Panc1 (cell line): ENCODE measurements at regions of chr10 and their contacts with region 1.

Region 1: DNA sequence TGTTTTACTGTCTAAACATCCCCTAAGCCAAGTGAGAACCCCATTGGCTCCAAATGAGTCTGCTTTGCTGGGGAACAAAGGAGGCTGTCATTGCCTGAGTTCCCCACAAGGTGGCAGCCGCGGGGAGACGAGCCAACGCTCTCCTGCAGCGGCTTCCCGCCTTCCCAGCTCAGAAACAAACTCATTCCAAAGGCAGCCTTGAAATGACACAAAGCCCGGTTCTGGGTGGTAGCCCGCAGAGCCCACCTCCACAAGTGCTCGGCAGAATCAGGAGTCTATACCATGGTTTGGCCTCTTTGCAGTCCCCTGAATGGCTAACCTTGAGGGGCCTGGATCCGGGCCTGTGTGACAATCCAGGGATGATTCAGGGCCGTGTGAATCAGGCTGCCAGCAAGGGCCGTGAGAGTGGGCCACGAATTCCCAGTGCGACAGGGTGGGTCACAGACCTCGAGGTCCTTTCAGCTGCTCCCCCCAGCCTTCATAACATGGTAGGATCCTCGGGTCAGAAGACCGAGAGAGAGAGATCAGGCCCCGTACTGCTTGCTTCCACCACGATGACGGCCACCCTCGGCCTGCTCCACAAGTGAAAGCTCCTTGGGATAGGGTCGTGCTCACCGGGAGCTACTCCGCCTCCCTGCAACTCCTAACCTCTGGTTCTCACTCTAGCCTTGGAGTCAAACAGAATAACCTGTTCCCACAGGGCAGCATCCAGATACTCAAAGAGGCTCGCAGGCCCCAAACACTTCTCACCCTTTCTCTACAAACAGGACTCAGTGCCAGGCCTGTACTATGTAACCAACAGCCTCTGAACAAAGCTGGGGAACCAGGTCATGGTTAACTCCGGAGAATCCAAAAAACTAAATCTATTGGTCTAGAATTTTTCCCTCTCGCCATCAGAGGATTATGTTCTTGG is 79.6 kb downstream of the DLG5 start:
- DNase-seq: peak; percentile 56
- ATAC-seq: peak; percentile 78
- H3K4me3 ChIP-seq: no peak overlapping the region
- H3K27ac ChIP-seq: peak overlapping the region; percentile 48; the same call in 1 of the 2 replicates
- H3K4me1 ChIP-seq: peaks cover 50% of the 10 kb centered on the region
- H3K27me3 ChIP-seq: no peaks in the 10 kb centered on the region
- CTCF ChIP-seq: peak; percentile 99

Region 2: GRCh38 chr10:77641788-77642397 is 205.1 kb before region 1 on chr10:
- CTCF ChIA-PET with region 1: no interaction called
- POLR2A ChIA-PET with region 1: no interaction called
- in situ Hi-C with region 1: no loop called
- intact Hi-C with region 1: no loop called
- DNase-seq: peak; percentile 84
- ATAC-seq: 0 out of 2 replicates have a peak, but pooled peaks have one; percentile 20
- H3K4me3 ChIP-seq: no peak overlapping the region
- H3K27ac ChIP-seq: peak overlapping the region; percentile 13; the same call in 1 of the 2 replicates
- H3K4me1 ChIP-seq: peaks cover 13% of the 10 kb centered on the region
- H3K27me3 ChIP-seq: no peaks in the 10 kb centered on the region
- CTCF ChIP-seq: peak; percentile 89

Region 3: GRCh38 chr10:77898647-77899477 is 51.9 kb after region 1 on chr10:
- CTCF ChIA-PET with region 1: no interaction called
- POLR2A ChIA-PET with region 1: no interaction called
- in situ Hi-C with region 1: no loop called
- intact Hi-C with region 1: no loop called
- DNase-seq: no peak
- ATAC-seq: peak; percentile 68
- H3K4me3 ChIP-seq: no peak overlapping the region
- H3K27ac ChIP-seq: no peak overlapping the region
- H3K4me1 ChIP-seq: peaks cover 12% of the 10 kb centered on the region
- H3K27me3 ChIP-seq: no peaks in the 10 kb centered on the region
- CTCF ChIP-seq: no peak

Region 4: DNA sequence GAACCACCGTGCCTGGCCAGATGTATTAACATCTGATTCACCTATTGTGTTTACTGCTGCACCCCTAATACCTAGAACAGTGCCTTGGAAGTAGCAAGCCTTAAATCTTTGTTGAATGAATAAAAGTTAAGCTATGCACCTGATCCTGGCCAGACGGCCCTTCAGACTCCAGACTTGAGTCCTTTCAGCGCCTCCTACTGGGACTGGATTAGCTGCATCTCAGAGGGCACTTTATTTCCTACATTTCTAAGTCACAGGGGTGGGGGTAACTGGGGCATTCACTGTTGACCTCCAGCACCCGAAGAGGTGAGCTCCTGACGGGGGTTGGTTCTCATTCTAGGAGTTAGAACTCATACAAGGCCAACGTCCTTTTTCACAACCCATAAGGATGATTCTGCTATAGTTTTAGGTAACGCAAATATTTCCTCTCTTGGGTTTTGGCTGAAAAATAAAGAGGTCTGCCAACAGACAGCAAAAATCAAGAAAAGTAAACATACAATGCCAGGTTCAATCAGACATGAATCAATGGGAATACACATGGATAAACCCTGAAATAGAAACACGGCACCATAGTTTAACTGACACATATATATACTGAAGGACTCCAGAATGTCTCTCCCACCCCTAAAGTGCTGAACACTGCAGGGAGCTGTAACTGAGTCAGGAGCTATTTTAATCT is 127.6 kb after region 1 on chr10:
- CTCF ChIA-PET with region 1: interaction called, 4 read pairs
- POLR2A ChIA-PET with region 1: no interaction called
- in situ Hi-C with region 1: no loop called
- intact Hi-C with region 1: loop called (anchors 5 kb)
- DNase-seq: no peak
- ATAC-seq: peak; percentile 72
- H3K4me3 ChIP-seq: no peak overlapping the region
- H3K27ac ChIP-seq: no peak overlapping the region
- H3K4me1 ChIP-seq: 0 out of 2 replicates have a peak, but pooled peaks cover 7% of the 10 kb centered on the region
- H3K27me3 ChIP-seq: no peaks in the 10 kb centered on the region
- CTCF ChIP-seq: peak; percentile 83; the same call in 1 of the 2 replicates

Region 5: DNA sequence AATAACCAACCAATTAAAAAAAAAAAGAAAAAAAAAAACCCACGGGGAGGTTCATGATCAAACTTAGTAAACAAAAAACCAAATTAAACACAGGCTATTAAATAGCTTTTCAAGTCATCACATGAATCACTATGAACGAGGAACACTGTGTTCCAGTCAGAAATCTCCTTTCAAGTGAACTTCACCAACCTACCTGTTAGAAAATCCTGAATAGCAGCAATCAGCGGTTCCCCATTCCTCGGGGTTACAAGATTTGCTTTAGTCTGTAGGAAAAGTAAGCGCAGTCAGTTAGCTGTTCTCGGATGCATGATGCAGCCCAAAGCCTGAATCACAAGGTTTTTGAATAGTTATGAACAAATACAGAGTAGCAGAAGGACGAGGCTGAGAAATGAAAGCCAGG is 163.3 kb after region 1 on chr10:
- CTCF ChIA-PET with region 1: no interaction called
- POLR2A ChIA-PET with region 1: no interaction called
- in situ Hi-C with region 1: no loop called
- intact Hi-C with region 1: loop called (anchors 5 kb)
- DNase-seq: no peak
- ATAC-seq: no peak
- H3K4me3 ChIP-seq: no peak overlapping the region
- H3K27ac ChIP-seq: no peak overlapping the region
- H3K4me1 ChIP-seq: no peaks in the 10 kb centered on the region
- H3K27me3 ChIP-seq: no peaks in the 10 kb centered on the region
- CTCF ChIP-seq: no peak